Activated CD4-positive, alpha-beta T cell treated with anti-CD3 and anti-CD28 coated beads for 36 hours (primary cell): ENCODE measurements at regions of chr18 and their contacts with region 1.

Region 1: DNA sequence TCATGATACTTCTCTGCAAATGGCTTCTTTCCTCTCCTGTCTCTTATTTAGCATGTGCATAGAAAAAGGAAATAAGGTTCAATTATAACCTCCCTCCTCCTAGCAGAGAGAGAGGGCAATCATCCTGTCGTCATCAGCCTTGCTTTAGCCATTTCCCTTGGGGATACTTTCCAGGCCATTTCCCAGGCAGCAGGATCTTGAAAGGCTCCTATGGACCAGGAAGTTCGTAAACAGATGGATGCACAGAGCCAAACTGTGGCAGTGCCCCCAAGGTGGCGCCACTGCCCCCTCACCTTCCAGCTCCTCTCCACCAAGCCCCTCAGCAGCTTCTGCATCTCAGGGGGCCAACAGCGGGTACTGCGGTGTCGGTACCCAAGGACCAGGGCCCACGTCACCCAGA is 157.4 kb downstream of the DTNA start:
- DNase-seq: peak; percentile 34
- ATAC-seq: no peak
- H3K4me3 Mint-ChIP-seq: no peak overlapping the region
- H3K27ac Mint-ChIP-seq: peak overlapping the region; percentile 67
- H3K4me1 Mint-ChIP-seq: peaks cover 47% of the 10 kb centered on the region
- H3K27me3 Mint-ChIP-seq: peaks cover 3% of the 10 kb centered on the region

Region 2: DNA sequence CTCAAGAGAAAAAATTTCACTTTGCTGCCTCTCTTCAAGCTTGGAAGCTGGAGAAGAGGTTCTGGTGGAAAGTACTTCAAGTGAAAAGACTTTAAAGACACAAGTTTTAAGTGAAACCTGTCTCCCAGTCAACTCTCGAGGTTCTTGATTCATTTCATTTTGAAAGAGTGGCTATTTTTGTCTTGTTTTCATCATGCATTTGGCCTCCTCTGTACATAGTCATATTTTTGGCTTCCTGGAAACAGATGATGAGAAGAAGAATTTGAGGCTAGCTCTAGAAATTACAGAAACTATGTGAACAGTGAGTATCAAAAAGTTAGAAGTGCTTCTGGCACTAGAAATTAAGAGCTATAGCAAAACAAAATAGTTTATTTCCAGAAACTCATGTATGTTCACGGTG is 32.6 kb before region 1 on chr18:
- CTCF ChIA-PET with region 1: no interaction called
- POLR2A ChIA-PET with region 1: no interaction called
- intact Hi-C with region 1: loop called in 1 of 2 experiments (anchors 1 kb)
- DNase-seq: no peak
- ATAC-seq: peak; percentile 91
- H3K4me3 Mint-ChIP-seq: no peak overlapping the region
- H3K27ac Mint-ChIP-seq: peak overlapping the region; percentile 87
- H3K4me1 Mint-ChIP-seq: peaks cover 17% of the 10 kb centered on the region
- H3K27me3 Mint-ChIP-seq: peaks cover 9% of the 10 kb centered on the region

Region 3: DNA sequence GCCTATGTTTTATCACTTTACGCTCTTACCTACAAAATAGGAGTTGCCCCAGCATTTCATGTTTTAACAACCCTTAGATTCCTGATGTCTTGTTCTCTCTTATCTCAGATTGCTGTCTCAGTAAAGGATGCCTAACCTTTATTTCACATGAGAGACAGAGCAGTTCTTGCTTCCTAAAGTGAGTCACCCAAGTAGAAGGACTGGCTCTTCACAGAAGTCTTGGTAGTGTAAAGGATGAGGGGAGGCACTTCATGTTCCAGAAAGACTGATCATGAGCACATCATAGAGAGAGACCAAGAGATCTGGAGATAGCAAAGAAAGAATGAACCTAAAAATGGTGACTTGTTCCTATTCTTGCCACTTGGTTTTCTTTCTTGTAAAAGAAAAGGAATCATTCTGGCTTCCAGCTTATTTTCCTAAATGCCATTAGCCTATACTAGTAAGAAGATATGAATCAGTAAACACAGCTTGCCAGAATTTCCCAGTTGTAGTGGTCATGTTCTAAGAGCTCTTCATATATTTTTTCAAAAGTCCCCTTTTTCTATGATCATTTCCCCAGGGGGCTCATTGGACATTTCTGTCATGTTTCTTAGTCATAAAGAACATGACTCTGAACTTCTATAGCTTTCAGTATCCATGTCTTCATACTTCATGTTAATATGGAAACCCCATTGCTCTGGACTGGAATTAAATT is 228.6 kb after region 1 on chr18:
- CTCF ChIA-PET with region 1: no interaction called
- POLR2A ChIA-PET with region 1: no interaction called
- intact Hi-C with region 1: loop called in 1 of 2 experiments (anchors 5 kb)
- DNase-seq: no peak
- ATAC-seq: peak; percentile 89
- H3K4me3 Mint-ChIP-seq: no peak overlapping the region
- H3K27ac Mint-ChIP-seq: peak overlapping the region; percentile 80
- H3K4me1 Mint-ChIP-seq: peaks cover 31% of the 10 kb centered on the region
- H3K27me3 Mint-ChIP-seq: no peaks in the 10 kb centered on the region

Region 4: GRCh38 chr18:35290073-35290735 is 422.7 kb after region 1 on chr18 and contains the start of gene ZSCAN30:
- CTCF ChIA-PET with region 1: no interaction called
- POLR2A ChIA-PET with region 1: no interaction called
- intact Hi-C with region 1: loop called in 1 of 2 experiments (anchors 5 kb)
- DNase-seq: peak; percentile 97
- ATAC-seq: peak; percentile 97
- H3K4me3 Mint-ChIP-seq: peak within 1 kb of the TSS; percentile 96
- H3K27ac Mint-ChIP-seq: peak within 1 kb of the TSS; percentile 96
- H3K4me1 Mint-ChIP-seq: peaks cover 45% of the 10 kb centered on the region
- H3K27me3 Mint-ChIP-seq: no peaks in the 10 kb centered on the region
- total RNA-seq, gene ZSCAN30: 24.2 to 25.4 TPM